Posterior cingulate gyrus (tissue), 11 donors: ENCODE measurements at regions of chr7 and their contacts with region 1.

Region 1: DNA sequence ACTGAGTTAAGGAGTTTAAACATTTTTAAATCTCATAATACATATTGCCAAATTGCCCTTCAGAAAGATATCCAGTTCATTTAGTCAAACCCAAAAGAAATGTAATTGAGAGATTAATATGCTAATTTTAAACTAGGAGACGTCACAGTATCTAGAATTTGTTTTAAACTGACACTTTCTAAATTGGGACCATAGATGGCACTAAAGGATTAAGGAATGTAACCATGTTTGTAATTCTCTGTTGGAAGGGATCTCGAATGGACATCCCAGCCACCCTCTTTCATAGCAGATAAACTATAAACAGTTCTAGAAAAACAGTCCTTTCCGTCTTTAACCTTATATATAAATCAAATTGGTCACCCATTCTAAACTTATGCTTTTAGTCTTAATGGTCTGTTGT is 30.0 kb upstream of the SAMD9L start:
- DNase-seq: no peak

Region 2: DNA sequence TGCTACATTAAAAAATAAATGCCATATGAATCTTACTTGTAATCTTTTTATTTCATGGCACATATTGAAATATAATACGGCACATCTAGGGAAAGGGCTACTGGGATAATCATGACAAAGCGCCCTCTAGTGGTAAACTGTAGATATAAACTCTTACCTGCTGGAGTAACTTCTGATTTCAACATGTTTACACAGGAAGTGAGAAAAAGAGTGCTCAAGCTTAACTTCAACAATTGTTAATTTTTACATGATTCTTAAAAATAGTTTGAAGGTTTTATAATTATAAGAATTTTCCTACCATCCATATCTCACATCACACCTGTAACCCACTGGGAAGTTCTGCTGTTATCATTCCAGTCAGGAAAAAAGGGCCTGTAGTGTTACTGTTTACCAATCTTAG is 50.1 kb after region 1 on chr7:
- intact Hi-C with region 1: loop called (anchors 5 kb)
- DNase-seq: no peak